Ascending aorta (tissue), 2 donors: ENCODE measurements at regions of chr5 and their contacts with region 1.

Region 1: DNA sequence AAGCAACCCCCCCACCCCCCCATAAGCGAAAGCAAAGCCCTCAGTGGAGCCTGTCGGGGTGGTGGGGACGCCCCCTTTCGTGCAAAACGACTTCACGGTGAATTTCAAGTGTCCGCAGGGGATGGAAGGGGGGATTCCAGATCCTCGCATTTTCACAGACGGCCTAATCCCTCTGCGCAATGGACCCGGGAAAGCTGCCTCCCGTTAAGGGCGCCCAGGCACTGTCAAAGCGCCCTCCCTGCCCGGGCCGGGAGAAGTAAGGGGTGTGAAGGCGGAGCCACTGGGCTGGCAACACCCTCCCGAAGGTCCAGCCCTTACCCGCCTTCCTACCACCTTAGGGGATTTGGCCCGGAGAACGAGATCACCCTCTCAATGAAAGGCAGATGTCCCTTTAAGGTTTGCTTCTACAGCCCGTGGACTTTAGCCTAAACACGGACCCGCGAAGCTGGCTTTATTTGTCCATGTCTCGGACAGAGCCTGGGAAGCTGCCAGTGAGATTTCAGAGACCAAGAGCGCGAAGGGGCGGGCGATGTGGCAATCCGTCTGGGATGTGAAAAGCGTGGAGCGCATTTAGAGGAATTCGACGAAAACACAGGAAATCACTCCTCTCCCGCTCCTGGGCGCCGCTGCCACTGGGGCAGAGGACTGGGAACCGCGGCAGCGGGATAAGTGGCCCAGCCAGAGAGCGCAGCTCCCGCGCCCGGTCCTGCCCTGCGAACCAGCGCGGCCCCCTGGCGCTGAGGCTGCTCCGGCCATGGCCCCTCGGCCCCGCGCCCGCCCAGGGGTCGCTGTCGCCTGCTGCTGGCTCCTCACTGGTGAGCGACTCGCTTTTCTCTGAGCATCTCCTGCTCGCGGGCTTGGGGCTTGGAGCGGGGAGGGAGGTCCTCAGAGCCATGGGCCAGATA is at the starts of genes ITGA1 and PELO:
- DNase-seq: peak; percentile 43 to 93
- H3K4me3 ChIP-seq: peak within 1 kb of the TSS; percentile 80 to 84
- H3K27ac ChIP-seq: peak within 1 kb of the TSS; percentile 90 to 97
- H3K4me1 ChIP-seq: peaks cover 0 to 28% of the 10 kb centered on the region in 2 donors
- H3K27me3 ChIP-seq: no peaks in the 10 kb centered on the region
- CTCF ChIP-seq: peak; percentile 21 to 70 (median 51)
- total RNA-seq, gene ITGA1: 42.7 TPM
- total RNA-seq, gene PELO: 39.1 TPM

Region 2: DNA sequence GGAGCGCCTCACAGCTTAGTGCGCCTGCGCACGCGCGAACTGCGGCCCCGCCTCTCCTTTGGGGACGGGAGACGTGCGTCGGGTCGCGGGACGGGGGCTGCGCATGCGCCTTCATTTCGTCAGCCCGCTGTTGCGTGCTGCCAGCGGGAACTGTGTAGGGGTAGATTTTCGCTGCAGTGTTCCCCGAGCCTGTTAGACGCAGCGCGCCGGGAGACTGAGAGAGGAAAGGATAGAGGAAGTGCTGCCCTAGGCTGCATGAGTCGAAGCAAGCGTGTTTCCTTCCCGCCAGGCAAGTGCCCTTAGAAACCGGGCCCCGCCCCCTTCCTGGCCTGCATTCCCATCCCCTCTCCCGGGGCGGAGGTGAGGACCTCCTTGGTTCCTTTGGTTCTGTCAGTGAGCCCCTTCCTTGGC is 12.1 kb after region 1 on chr5:
- intact Hi-C with region 1: loop called (anchors 1 kb)
- DNase-seq: peak; percentile 78 to 96
- H3K4me3 ChIP-seq: peak overlapping the region; percentile 83
- H3K27ac ChIP-seq: peak overlapping the region; percentile 96 to 100
- H3K4me1 ChIP-seq: peaks cover 5 to 57% of the 10 kb centered on the region in 2 donors
- H3K27me3 ChIP-seq: no peaks in the 10 kb centered on the region
- CTCF ChIP-seq: no peak

Region 3: DNA sequence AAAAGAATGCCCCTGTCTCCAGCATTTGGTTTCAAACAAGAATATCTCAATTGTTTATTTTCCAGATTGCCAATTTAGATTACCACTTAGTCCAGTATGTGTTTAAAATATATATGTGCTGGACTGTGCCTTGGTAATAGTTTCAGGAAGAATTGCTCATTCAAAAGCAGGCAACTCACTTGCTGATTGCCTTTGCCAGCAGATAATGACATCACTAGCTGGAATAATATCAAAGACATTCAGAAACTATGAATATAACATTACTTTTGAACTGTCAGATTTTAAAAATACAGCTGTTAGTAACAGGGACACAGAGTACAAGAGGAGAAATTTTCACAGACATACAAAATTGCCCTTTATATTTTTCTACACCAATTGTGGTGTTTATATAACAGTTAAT is 105.3 kb after region 1 on chr5:
- intact Hi-C with region 1: loop called (anchors 5 kb)
- DNase-seq: no peak
- H3K4me3 ChIP-seq: no peak overlapping the region
- H3K27ac ChIP-seq: peak overlapping the region; percentile 80 to 83
- H3K4me1 ChIP-seq: peaks cover 25 to 41% of the 10 kb centered on the region in 2 donors
- H3K27me3 ChIP-seq: no peaks in the 10 kb centered on the region
- CTCF ChIP-seq: no peak

Region 4: DNA sequence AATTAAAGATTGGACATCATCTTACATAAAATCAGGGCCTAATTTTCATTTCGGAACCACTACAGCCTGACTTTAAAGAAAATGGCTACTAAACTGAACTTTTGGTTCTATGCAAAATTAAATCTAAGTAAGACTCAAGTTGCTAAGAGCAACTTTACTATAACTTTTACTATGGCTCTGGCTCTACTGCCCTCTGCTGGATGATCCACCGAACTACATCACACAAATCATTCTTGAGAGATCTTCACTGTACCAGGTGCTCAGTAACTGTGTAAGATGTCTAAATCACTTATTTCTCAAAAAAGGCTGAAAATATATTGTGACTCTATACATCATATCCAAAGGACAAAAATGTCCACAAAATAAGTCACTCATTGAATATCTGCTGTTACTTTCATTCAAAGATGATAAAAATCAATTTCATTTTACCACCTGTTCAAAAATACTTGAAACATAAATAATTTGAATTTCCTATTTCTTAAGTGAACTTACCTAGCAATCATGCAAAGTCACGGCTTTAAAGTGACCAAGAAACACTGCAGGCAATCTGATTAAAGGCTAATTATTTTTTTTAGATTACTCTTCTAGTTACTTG is 308.2 kb after region 1 on chr5:
- intact Hi-C with region 1: loop called (anchors 10 kb)
- DNase-seq: peak in 1 of 2 donors; percentile 83
- H3K4me3 ChIP-seq: no peak overlapping the region
- H3K27ac ChIP-seq: no peak overlapping the region
- H3K4me1 ChIP-seq: peaks cover 0 to under 1% of the 10 kb centered on the region in 2 donors
- H3K27me3 ChIP-seq: no peaks in the 10 kb centered on the region
- CTCF ChIP-seq: peak; percentile 73 to 86 (median 81)